ENCODE measurements at regions of chr3 and their contacts with region 1.

Region 1: DNA sequence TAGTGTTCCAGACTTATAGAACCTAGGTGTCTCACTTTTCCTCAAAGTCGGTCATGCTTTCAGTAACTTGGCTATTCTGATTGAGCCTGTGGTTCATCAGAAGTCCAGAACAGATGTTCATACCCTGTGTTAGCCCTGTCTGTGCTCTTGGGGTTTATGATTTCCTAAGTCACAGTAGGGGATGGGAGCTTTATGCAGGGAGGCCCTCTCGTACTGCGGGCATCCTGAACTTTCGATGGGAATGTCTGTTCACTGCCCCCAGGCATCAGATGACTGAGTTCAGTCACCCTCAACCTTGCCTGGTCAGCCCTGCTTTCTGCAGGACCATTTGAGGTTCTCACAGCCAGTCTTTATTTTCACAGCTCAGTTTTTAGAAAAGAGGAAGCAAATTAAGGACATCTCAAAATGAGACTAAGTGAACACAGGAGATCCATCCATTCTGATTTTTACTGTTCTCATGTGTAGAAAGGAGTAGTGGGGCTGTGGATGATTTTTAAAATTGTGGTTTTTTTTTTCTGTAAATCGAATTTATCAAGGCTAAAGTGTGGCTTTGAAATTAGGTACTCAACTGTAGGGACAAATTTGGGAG is 71.3 kb downstream of the CMTM8 start:
- DNase-seq: no peak
- H3K4me3 ChIP-seq: no peak overlapping the region
- H3K27ac ChIP-seq: no peak overlapping the region
- H3K4me1 ChIP-seq: peaks cover 0 to 6% (median 0%) of the 10 kb centered on the region in 4 donors
- H3K27me3 ChIP-seq: no peaks in the 10 kb centered on the region
- CTCF ChIP-seq: no peak
- EP300 ChIP-seq: no peak
- POLR2A ChIP-seq: no peak

Region 2: DNA sequence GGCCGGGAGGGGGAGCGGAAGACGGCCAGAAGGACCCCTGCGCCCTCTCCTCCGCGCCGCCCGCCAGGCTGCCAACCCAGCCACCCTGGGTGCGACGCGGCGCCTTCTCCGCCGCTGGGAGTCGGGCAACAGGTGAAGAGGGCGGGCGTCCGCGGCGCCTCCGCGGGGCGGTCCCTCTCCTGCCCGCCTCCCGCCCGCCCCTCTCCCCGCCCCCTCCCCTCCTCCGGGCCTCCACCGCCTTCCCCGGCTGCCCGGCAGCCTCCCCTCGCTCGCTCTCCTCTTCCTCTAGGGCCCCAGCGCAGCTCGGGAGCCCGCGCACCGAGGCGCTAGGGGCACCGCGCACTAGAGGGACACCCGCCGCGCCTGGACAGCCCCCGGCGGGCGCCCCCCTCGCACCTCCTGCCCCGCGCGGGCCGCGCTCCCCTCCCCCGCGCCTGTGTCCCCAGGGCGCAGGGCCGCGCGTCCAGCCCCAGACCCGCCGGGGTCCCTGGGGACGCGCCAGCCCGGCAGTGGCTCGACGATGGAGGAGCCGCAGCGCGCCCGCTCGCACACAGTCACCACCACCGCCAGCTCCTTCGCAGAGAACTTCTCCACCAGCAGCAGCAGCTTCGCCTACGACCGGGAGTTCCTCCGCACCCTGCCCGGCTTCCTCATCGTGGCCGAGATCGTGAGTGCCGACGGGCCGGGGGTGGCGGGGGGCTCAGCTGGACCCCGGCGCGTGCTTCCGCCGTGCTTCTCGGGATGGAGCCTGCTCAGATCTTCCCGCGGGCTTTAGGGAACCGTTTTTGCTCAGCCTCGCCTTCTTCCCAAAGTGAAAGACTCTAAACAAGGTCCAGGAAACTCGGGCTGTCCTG is 71.1 kb before region 1 on chr3 and contains the start of gene CMTM8:
- intact Hi-C with region 1: no loop called
- DNase-seq: no peak
- H3K4me3 ChIP-seq: peak within 1 kb of the TSS; percentile 32 to 59 (median 52)
- H3K27ac ChIP-seq: peak within 1 kb of the TSS; percentile 18 to 51 (median 30)
- H3K4me1 ChIP-seq: peaks cover 0 to 18% (median 13%) of the 10 kb centered on the region in 4 donors
- H3K27me3 ChIP-seq: peaks cover 0 to 32% (median 10%) of the 10 kb centered on the region in 3 donors
- CTCF ChIP-seq: no peak
- EP300 ChIP-seq: no peak
- POLR2A ChIP-seq: peak in 1 of 2 donors; percentile 8
- total RNA-seq, gene CMTM8: 0.49 to 4.4 (median 0.81) TPM in 3 of 4 donors, not detected in the other

Region 3: DNA sequence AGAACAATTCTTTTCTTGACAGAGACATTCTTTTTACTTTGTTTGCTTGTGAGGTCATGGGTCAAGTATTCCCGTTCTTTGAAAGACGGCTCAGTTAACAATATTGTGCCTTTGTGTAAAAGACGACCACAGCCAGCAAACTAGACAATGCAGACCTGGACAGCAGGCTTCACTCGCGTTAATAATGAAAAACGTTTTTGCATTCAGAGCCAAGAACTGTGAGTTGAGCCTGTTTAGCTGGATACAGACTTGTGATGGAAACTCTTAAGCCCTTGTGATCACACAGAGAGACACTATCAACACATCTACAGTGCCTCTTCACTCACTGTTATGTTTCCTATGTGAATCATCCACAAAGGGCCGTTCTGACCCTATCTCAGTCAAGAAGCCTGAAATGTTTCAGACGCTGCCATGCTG is 44.6 kb after region 1 on chr3:
- intact Hi-C with region 1: loop called (anchors 5 kb)
- DNase-seq: no peak
- H3K4me3 ChIP-seq: no peak overlapping the region
- H3K27ac ChIP-seq: no peak overlapping the region
- H3K4me1 ChIP-seq: no peaks in the 10 kb centered on the region
- H3K27me3 ChIP-seq: no peaks in the 10 kb centered on the region
- CTCF ChIP-seq: no peak
- EP300 ChIP-seq: no peak
- POLR2A ChIP-seq: no peak

Region 4: GRCh38 chr3:32510075-32510724 is 200.5 kb after region 1 on chr3:
- intact Hi-C with region 1: no loop called
- DNase-seq: peak; percentile 76
- H3K4me3 ChIP-seq: no peak overlapping the region
- H3K27ac ChIP-seq: no peak overlapping the region
- H3K4me1 ChIP-seq: no peaks in the 10 kb centered on the region
- H3K27me3 ChIP-seq: no peaks in the 10 kb centered on the region
- CTCF ChIP-seq: peak; percentile 54 to 69 (median 62)
- EP300 ChIP-seq: no peak
- POLR2A ChIP-seq: no peak

Region 5: DNA sequence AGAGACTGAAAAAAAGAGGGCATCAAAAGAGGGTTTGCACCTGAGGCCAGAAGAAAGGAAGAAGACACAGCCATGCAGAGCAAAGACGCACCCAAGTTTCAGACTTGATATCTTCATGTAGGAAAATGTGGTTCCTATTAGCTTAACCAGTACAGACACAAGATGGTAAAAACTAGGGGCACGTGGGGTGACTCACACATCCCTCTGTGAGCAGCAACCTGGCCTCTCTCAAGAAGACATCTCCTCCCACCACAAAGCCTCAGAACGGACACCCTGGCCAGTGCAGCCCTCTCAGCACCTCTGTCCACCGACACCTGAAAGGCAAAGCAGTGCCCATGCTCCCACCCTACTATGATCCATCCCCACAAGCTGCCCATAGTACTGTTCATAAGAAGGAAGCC is 753.9 kb after region 1 on chr3:
- intact Hi-C with region 1: no loop called
- DNase-seq: no peak
- H3K4me3 ChIP-seq: no peak overlapping the region
- H3K27ac ChIP-seq: peak overlapping the region in 1 of 4 donors; percentile 42
- H3K4me1 ChIP-seq: no peaks in the 10 kb centered on the region
- H3K27me3 ChIP-seq: no peaks in the 10 kb centered on the region
- CTCF ChIP-seq: no peak
- EP300 ChIP-seq: no peak
- POLR2A ChIP-seq: no peak